AG04450 (cell line): ENCODE measurements at regions of chr21 and their contacts with region 1.

Region 1: GRCh38 chr21:43938751-43939442 is 73.2 kb upstream of the TRAPPC10 start:
- DNase-seq: peak; percentile 11
- H3K4me3 ChIP-seq: peak overlapping the region; percentile 36
- H3K27ac ChIP-seq: no peak overlapping the region
- H3K27me3 ChIP-seq: no peaks in the 10 kb centered on the region
- CTCF ChIP-seq: peak; percentile 92

Region 2: DNA sequence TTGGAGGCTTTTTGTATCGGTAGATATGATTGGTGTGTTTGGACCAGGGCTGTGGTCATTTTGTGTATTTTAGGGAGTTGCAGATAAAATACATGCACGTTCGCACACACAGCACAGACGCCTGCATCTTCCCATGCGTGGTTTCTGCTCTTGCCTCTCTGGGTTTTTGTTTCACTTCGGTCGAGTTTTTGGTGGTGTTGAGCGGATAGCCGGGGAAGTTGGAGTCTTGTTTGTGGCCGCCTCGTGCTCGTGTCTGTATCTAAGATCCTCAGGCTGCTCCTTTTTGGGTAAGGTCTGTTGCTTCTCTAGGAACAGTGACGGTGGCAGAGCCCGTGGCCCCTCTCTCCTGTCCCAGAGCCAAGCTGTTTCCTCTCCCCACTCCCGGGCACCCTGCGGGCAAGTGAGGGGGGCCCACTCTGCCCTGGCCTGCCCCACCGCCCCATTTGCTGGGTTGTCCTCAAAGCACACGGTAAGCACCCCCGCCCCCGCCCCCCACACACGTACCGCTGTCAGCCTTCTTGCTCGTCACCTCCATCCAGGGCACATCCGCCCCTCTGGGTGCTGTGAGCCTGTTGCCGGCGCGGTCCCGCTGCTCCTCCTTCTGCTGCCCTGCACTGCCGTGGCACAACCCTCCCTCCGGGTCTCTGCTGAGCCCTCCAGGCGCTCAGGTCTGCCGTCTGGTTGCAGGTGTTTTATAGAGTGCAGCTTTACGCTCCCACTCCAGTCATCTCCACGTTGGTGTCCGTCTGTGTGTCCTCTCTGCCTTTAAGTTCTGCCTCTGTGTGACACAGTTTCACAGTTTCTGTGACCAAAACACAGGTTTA is 22.0 kb before region 1 on chr21:
- CTCF ChIA-PET with region 1: interaction called, 10 read pairs
- POLR2A ChIA-PET with region 1: no interaction called
- DNase-seq: no peak
- H3K4me3 ChIP-seq: peak overlapping the region; percentile 35
- H3K27ac ChIP-seq: no peak overlapping the region
- H3K27me3 ChIP-seq: no peaks in the 10 kb centered on the region
- CTCF ChIP-seq: no peak

Region 3: GRCh38 chr21:43948740-43949498 is 10.0 kb after region 1 on chr21:
- CTCF ChIA-PET with region 1: no interaction called
- POLR2A ChIA-PET with region 1: no interaction called
- DNase-seq: no peak
- H3K4me3 ChIP-seq: no peak overlapping the region
- H3K27ac ChIP-seq: no peak overlapping the region
- H3K27me3 ChIP-seq: no peaks in the 10 kb centered on the region
- CTCF ChIP-seq: no peak